MCF 10A (cell line): ENCODE measurements at regions of chr17 and their contacts with region 1.

Region 1: GRCh38 chr17:76072148-76072858 is at the start of gene SRP68:
- DNase-seq: peak; percentile 90
- H3K4me3 Mint-ChIP-seq: peak within 1 kb of the TSS; percentile 90
- H3K27ac Mint-ChIP-seq: peak within 1 kb of the TSS; percentile 95
- H3K4me1 Mint-ChIP-seq: peaks cover 4% of the 10 kb centered on the region
- H3K27me3 Mint-ChIP-seq: peaks cover 30% of the 10 kb centered on the region
- CTCF ChIP-seq: no peak
- total RNA-seq, gene SRP68: 80.8 and 106 TPM in 2 replicates

Region 2: DNA sequence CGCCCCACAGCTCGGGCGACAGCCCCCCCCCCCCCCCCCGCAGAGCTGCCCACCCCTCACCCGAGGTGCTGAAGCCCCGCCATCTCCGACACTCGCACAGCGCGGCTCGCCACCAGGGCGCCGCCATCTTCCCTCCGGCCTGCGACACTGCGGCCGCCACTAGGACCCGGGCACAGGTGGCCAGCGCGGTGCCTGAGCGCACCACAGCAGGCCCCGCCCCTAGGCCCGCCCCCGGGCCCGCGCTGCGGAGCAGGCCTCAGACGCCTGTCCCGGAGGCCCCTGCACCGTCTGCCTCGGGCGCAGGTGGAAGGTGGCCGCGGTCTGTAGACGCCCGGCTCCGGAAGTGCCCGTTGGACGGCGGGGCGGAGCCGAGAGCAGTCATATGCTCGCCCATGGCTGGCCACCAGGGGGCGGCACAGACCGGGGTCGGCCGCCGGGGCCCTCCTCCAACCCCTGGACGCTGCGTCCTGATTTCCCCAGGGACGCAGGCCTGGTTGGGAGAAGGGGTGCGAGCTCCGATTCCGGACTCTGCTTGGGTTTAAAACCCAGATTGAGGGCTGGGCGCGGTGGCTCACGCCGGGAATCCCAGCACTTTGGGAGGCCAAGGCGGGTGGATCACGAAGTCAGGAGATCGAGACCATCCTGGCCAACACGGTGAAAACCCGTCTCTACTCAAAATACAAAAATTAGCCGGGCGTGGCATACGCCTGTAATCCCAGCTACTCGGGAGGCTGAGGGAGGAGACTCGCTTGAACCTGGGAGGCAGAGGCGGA is 167.4 kb before region 1 on chr17 and contains the start of gene MRPL38:
- CTCF ChIA-PET with region 1: no interaction called
- POLR2A ChIA-PET with region 1: interaction called, 13 read pairs
- intact Hi-C with region 1: no loop called
- DNase-seq: peak; percentile 93
- H3K4me3 Mint-ChIP-seq: peak within 1 kb of the TSS; percentile 91
- H3K27ac Mint-ChIP-seq: peak within 1 kb of the TSS; percentile 92
- H3K4me1 Mint-ChIP-seq: peaks cover 16% of the 10 kb centered on the region
- H3K27me3 Mint-ChIP-seq: no peaks in the 10 kb centered on the region
- CTCF ChIP-seq: peak; percentile 96
- total RNA-seq, gene MRPL38: 97.9 and 111 TPM in 2 replicates

Region 3: DNA sequence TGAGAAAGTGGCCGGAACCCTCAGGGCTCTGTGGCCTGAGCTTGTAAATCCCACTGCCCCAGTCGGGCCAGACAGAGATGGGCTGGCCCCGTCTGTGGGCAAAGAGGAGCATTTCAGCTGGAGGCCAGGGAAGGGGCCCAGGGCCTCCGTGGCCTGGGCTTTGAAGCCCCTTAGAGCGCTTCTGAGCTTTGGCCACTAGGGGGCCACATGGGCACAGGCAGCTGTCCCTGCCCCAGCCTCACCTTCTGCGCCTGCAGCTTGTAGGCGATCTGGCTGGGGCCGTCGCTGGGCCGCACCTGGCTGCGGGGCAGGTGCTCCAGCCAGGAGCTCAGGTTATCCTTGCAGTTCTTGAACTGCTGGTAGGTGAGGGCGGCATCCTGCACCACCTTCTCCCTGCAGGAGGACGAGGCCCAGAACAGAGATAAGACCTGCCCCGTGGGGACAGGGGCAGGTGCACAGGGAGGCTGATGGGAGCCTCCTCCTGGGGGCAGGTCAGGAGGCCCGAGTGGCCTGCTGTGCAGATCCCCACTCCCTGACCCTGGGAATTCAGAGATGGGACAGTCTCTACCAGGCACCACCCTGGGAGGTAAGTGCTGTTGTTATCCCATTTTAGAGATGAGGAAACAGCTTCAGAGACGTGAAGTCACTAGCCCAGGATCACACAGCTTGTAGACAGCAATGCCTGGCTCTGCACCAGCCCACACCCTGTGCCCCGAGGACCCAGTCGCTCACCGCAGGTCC is 57.9 kb before region 1 on chr17:
- CTCF ChIA-PET with region 1: no interaction called
- POLR2A ChIA-PET with region 1: interaction called, 4 read pairs
- intact Hi-C with region 1: loop called (anchors 5 kb)
- DNase-seq: peak; percentile 63
- H3K4me3 Mint-ChIP-seq: no peak overlapping the region
- H3K27ac Mint-ChIP-seq: no peak overlapping the region
- H3K4me1 Mint-ChIP-seq: no peaks in the 10 kb centered on the region
- H3K27me3 Mint-ChIP-seq: no peaks in the 10 kb centered on the region
- CTCF ChIP-seq: peak; percentile 95

Region 4: DNA sequence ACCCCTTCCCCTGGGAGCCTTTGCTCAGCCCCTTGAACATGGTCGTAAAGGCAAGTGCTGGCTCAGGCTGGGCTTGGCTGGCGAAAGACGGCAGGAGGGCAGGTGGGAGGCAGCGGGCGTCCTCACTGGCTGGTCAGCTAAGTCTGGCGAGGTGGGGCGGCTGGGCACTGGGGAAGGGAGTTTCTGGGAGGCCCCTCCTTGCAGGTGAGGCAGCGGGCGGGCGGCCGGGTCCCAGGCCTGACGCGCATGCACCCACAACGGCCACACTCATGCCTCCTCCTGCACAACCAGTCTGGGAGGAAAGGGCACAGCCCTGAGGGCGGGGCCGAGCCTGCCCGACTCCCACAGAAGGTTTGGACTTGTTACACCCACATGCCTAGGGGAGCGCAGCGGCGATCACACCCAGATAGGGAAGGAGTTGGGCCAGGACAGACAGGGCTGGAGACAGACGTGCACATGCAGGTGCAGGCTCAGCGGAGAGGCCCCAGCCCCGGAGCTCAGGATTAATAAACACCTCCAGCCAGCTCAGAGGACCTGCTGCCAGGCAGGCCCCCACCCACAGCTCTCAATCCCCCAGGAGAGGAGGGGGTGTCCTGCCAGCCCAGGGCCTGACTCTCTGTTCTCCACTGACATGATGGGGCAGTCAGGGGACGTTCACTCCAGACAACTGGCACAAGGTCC is 45.0 kb before region 1 on chr17 and contains the start of gene EVPL:
- CTCF ChIA-PET with region 1: no interaction called
- POLR2A ChIA-PET with region 1: interaction called, 4 read pairs
- intact Hi-C with region 1: loop called (anchors 5 kb)
- DNase-seq: peak; percentile 91
- H3K4me3 Mint-ChIP-seq: peak within 1 kb of the TSS; percentile 80
- H3K27ac Mint-ChIP-seq: peak within 1 kb of the TSS; percentile 74
- H3K4me1 Mint-ChIP-seq: peaks cover 6% of the 10 kb centered on the region
- H3K27me3 Mint-ChIP-seq: no peaks in the 10 kb centered on the region
- CTCF ChIP-seq: no peak
- total RNA-seq, gene EVPL: 7.7 and 8.1 TPM in 2 replicates

Region 5: GRCh38 chr17:76053246-76054116 is 18.8 kb before region 1 on chr17:
- CTCF ChIA-PET with region 1: no interaction called
- POLR2A ChIA-PET with region 1: interaction called, 10 read pairs
- intact Hi-C with region 1: no loop called
- DNase-seq: peak; percentile 70
- H3K4me3 Mint-ChIP-seq: no peak overlapping the region
- H3K27ac Mint-ChIP-seq: no peak overlapping the region
- H3K4me1 Mint-ChIP-seq: peaks cover 13% of the 10 kb centered on the region
- H3K27me3 Mint-ChIP-seq: no peaks in the 10 kb centered on the region
- CTCF ChIP-seq: no peak

Region 6: GRCh38 chr17:76103274-76104139 is 31.2 kb after region 1 on chr17 and contains the start of gene EXOC7:
- CTCF ChIA-PET with region 1: no interaction called
- POLR2A ChIA-PET with region 1: interaction called, 12 read pairs
- intact Hi-C with region 1: no loop called
- DNase-seq: peak; percentile 93
- H3K4me3 Mint-ChIP-seq: peak within 1 kb of the TSS; percentile 95
- H3K27ac Mint-ChIP-seq: peak within 1 kb of the TSS; percentile 98
- H3K4me1 Mint-ChIP-seq: peaks cover 5% of the 10 kb centered on the region
- H3K27me3 Mint-ChIP-seq: no peaks in the 10 kb centered on the region
- CTCF ChIP-seq: peak; percentile 13
- total RNA-seq, gene EXOC7: 80.8 and 106 TPM in 2 replicates